Endothelial cell of umbilical vein (primary cell): ENCODE measurements at regions of chr18 and their contacts with region 1.

Region 1: GRCh38 chr18:61748004-61748403 is 144.8 kb downstream of the RNF152 start:
- DNase-seq: peak; percentile 88
- H3K4me3 ChIP-seq: no peak overlapping the region
- H3K27ac ChIP-seq: peak overlapping the region; percentile 88
- H3K4me1 ChIP-seq: peaks cover 23% of the 10 kb centered on the region
- H3K27me3 ChIP-seq: no peaks in the 10 kb centered on the region
- CTCF ChIP-seq: no peak
- POLR2A ChIP-seq: peak; percentile 45

Region 2: DNA sequence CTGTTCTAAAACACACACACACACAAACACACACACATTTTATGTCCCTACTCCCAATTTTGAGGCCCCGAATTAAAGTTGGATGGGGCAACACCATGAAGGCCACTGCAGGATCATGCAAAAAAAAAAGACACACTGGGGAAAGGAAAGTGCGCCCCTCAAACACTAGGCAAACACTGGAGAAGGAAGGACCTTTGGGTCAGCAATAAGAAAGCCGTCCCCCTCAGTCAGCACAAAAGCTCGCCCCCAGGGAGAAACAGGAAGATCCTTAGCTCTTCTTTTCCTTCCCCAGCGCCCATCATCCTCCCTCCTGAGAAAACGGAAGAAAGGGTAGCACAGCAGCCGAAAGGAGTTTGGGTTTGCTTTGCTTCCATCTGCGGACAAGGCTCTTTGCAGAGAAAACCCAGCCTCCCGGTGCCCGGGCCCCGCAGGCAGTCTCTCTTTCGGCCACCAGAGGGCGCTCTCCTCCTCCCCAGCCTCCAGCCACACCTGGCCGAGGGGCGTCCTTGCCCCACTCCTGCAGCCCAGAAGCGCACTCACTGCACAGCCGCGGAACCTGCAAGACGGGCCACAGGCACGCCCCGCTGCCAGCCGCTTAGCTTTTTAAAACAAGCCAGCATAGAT is 166.3 kb before region 1 on chr18:
- CTCF ChIA-PET with region 1: no interaction called
- POLR2A ChIA-PET with region 1: no interaction called
- dilution Hi-C with region 1: no loop called
- intact Hi-C with region 1: no loop called
- DNase-seq: peak; percentile 77
- H3K4me3 ChIP-seq: peak overlapping the region; percentile 40 to 56 (median 54)
- H3K27ac ChIP-seq: peak overlapping the region; percentile 25
- H3K4me1 ChIP-seq: peaks cover 18% of the 10 kb centered on the region
- H3K27me3 ChIP-seq: no peaks in the 10 kb centered on the region
- CTCF ChIP-seq: peak; percentile 97
- POLR2A ChIP-seq: no peak

Region 3: GRCh38 chr18:61690418-61691138 is 57.4 kb before region 1 on chr18:
- CTCF ChIA-PET with region 1: no interaction called
- POLR2A ChIA-PET with region 1: no interaction called
- dilution Hi-C with region 1: no loop called
- intact Hi-C with region 1: loop called (anchors 1 kb)
- DNase-seq: no peak
- H3K4me3 ChIP-seq: no peak overlapping the region
- H3K27ac ChIP-seq: no peak overlapping the region
- H3K4me1 ChIP-seq: peaks cover 16% of the 10 kb centered on the region
- H3K27me3 ChIP-seq: no peaks in the 10 kb centered on the region
- CTCF ChIP-seq: no peak
- POLR2A ChIP-seq: no peak

Region 4: GRCh38 chr18:61719671-61720070 is 28.3 kb before region 1 on chr18:
- CTCF ChIA-PET with region 1: no interaction called
- POLR2A ChIA-PET with region 1: no interaction called
- dilution Hi-C with region 1: no loop called
- intact Hi-C with region 1: loop called (anchors 2 kb)
- DNase-seq: peak; percentile 88
- H3K4me3 ChIP-seq: no peak overlapping the region
- H3K27ac ChIP-seq: peak overlapping the region; percentile 33
- H3K4me1 ChIP-seq: peaks cover 19% of the 10 kb centered on the region
- H3K27me3 ChIP-seq: no peaks in the 10 kb centered on the region
- CTCF ChIP-seq: no peak
- POLR2A ChIP-seq: peak; percentile 42